ENCODE measurements at regions of chr10 and their contacts with region 1.

Region 1: DNA sequence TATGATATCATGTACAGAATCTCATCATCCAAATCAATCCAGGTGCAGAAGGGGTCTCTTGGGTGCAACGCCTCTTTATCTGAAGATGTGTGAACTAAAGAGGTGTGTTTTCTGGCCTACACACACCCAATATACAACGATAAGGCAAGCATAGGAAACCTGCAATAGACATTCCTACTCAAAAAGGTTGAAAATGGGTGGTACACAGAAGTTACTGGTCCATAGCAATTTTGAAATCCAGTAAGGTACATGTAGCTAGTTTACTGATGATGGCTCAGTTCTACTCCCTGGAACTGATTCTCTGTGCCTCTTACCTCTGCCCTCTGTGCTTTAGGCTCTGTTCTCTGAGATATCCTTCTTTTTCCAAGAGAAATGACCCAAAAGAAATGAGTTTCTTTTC is 22.2 kb upstream of the CCDC3 start:
- DNase-seq: no peak
- ATAC-seq: no peak
- H3K4me3 ChIP-seq: no peak overlapping the region
- H3K27ac ChIP-seq: no peak overlapping the region
- H3K4me1 ChIP-seq: no peaks in the 10 kb centered on the region
- H3K27me3 ChIP-seq: no peaks in the 10 kb centered on the region
- CTCF ChIP-seq: no peak
- POLR2A ChIP-seq: no peak

Region 2: GRCh38 chr10:12299222-12299965 is 724.4 kb before region 1 on chr10:
- in situ Hi-C with region 1: no loop called
- intact Hi-C with region 1: loop called (anchors 5 kb)
- DNase-seq: no peak
- ATAC-seq: no peak
- H3K4me3 ChIP-seq: no peak overlapping the region
- H3K27ac ChIP-seq: no peak overlapping the region
- H3K4me1 ChIP-seq: no peaks in the 10 kb centered on the region
- H3K27me3 ChIP-seq: no peaks in the 10 kb centered on the region
- CTCF ChIP-seq: no peak
- POLR2A ChIP-seq: no peak

Region 3: GRCh38 chr10:13136651-13137050 is 112.9 kb after region 1 on chr10:
- in situ Hi-C with region 1: no loop called
- intact Hi-C with region 1: no loop called
- DNase-seq: no peak
- ATAC-seq: no peak
- H3K4me3 ChIP-seq: no peak overlapping the region
- H3K27ac ChIP-seq: no peak overlapping the region
- H3K4me1 ChIP-seq: no peaks in the 10 kb centered on the region
- H3K27me3 ChIP-seq: no peaks in the 10 kb centered on the region
- CTCF ChIP-seq: no peak
- POLR2A ChIP-seq: no peak

Measured in gastrocnemius medialis (tissue), 4 donors.